ENCODE measurements at regions of chr15 and their contacts with region 1.

Region 1: DNA sequence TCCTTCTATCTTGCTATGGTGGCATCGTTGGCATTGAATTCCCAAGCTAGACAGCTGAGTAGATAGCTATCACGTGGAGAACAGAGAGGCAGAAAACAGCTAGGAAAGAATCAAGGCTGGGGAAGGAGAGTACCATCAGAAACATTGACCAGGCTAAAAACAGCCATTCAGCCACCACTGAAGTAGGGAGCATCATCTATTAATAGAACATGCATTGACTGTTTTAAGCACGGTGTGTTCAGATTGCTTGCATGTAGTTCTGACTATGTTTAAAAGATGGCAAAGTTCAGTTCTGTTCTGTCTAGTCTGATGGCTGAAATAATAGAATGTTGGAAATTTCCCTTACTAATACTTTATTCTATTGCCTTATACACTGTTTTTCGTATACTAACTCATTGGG is 413.0 kb downstream of the GABRB3 start:
- DNase-seq: no peak
- H3K4me3 ChIP-seq: no peak overlapping the region
- H3K27ac ChIP-seq: peak overlapping the region in 4 of 59 donors; percentile 10 to 39 (median 26)
- H3K27me3 ChIP-seq: peaks cover 0 to 4% (median 0%) of the 10 kb centered on the region in 45 donors
- CTCF ChIP-seq: no peak

Region 2: DNA sequence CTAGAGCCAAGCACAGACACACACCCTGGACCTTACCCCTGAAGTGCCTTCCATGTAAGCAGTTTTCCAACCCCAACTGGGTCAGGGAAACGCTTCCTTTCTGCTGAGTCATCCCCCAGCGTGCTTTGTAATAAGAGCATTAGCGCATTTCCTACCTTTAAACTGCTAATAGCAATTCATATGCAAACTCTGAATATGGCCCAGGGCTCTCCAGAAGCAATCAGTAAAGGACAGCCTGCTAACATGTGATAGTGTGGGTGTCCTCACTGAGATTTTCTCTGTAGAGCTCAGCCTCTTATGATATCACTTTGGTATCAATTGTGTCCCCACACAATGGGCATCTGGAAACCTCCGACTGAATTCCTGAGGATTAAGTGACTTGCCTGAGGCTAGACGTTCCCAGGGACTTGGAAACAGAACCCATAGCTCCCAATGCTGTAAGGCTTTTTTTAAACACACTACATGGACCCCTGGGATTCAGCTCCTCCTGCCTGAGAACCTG is 407.4 kb after region 1 on chr15:
- intact Hi-C with region 1: loop called in 1 of 2 experiments (anchors 10 kb)
- DNase-seq: no peak
- H3K4me3 ChIP-seq: peak overlapping the region in 2 of 59 donors; percentile 0 to 24
- H3K27ac ChIP-seq: peak overlapping the region in 2 of 59 donors; percentile 14 to 45
- H3K27me3 ChIP-seq: peaks cover 0 to 30% (median 0%) of the 10 kb centered on the region in 45 donors
- CTCF ChIP-seq: no peak